CD4-positive, alpha-beta memory T cell (primary cell): ENCODE measurements at regions of chr20 and their contacts with region 1.

Region 1: GRCh38 chr20:25444556-25444955 is 37.1 kb downstream of the GINS1 start:
- DNase-seq: no peak
- H3K4me3 ChIP-seq: no peak overlapping the region
- H3K4me3 Mint-ChIP-seq: no peak overlapping the region
- H3K27ac ChIP-seq: no peak overlapping the region
- H3K27ac Mint-ChIP-seq: peak overlapping the region in 1 of 7 donors; percentile 52
- H3K4me1 ChIP-seq: no peaks in the 10 kb centered on the region
- H3K4me1 Mint-ChIP-seq: peaks cover 0 to 1% (median 0%) of the 10 kb centered on the region in 4 donors
- H3K27me3 ChIP-seq: no peaks in the 10 kb centered on the region
- H3K27me3 Mint-ChIP-seq: no peaks in the 10 kb centered on the region

Region 2: GRCh38 chr20:25310268-25310920 is 134.2 kb before region 1 on chr20:
- CTCF ChIA-PET with region 1: no interaction called
- POLR2A ChIA-PET with region 1: no interaction called
- intact Hi-C with region 1: loop called (anchors 5 kb)
- DNase-seq: peak; percentile 23 to 49 (median 31)
- H3K4me3 ChIP-seq: peak overlapping the region; percentile 13 to 46
- H3K4me3 Mint-ChIP-seq: peak overlapping the region; percentile 66 to 96 (median 83)
- H3K27ac ChIP-seq: peak overlapping the region; percentile 55
- H3K27ac Mint-ChIP-seq: peak overlapping the region; percentile 53 to 98 (median 93)
- H3K4me1 ChIP-seq: peaks cover 20% of the 10 kb centered on the region
- H3K4me1 Mint-ChIP-seq: peaks cover 13 to 41% (median 18%) of the 10 kb centered on the region in 4 donors
- H3K27me3 ChIP-seq: no peaks in the 10 kb centered on the region
- H3K27me3 Mint-ChIP-seq: no peaks in the 10 kb centered on the region